Activated T-helper 2 cell treated with anti-CD3 and anti-CD28 coated beads, Interferon-gamma antibody, Interleukin-2, Interleukin-4, amounts not matched to agents 10 μg/mL and 5 μg/mL and 100 μg/mL, durations not matched to agents 14 hours and 24 hours and 36 hours (primary cell): ENCODE measurements at regions of chr16 and their contacts with region 1.

Region 1: GRCh38 chr16:2023098-2023925 is 3.4 kb upstream of the NHERF2 start:
- DNase-seq: peak; percentile 90
- H3K4me3 Mint-ChIP-seq: peak overlapping the region; percentile 73
- H3K27ac Mint-ChIP-seq: peak overlapping the region; percentile 28
- H3K4me1 Mint-ChIP-seq: peaks cover 16% of the 10 kb centered on the region
- H3K27me3 Mint-ChIP-seq: peaks cover 42% of the 10 kb centered on the region

Region 2: DNA sequence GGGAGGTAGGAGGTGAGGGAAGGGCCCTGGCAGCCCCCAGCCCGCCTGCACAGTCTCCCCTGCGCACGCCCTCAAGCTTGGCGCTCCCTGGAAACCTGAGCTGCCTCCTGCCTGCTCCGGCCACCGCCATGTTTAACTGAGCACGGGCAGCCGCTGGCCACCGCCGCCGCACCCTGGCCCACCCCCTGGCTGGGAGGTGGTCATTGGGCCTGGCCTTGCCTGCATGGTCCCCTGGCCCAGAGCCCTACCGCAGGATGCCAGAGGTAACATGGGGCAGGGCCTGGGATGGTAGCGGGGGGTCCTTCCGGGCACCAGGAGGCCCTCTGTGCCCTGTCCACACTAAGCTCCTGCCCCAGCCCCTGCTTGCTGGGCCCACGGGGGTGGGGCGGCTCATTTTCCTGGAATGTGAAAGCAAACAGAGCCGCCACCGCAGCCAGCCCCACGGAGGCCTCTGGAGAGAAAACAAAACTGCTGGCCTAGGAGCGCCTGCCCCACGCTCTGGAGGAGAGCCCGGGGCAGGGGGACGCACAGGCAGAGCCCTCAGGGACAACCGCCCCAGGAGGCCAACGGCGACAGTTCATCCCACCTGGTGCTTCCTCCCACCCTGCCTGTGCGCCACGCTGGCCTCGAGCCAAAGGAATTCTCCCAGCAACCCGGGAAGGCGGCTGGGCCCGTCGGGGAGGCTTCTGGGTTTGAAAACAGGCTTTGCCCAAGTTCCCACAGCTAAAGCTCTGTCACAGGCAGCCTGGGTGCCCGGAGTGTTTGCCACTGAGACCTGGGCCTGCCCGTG is 12.3 kb after region 1 on chr16:
- intact Hi-C with region 1: no loop called
- DNase-seq: no peak
- H3K4me3 Mint-ChIP-seq: no peak overlapping the region
- H3K27ac Mint-ChIP-seq: no peak overlapping the region
- H3K4me1 Mint-ChIP-seq: no peaks in the 10 kb centered on the region
- H3K27me3 Mint-ChIP-seq: no peaks in the 10 kb centered on the region

Region 3: DNA sequence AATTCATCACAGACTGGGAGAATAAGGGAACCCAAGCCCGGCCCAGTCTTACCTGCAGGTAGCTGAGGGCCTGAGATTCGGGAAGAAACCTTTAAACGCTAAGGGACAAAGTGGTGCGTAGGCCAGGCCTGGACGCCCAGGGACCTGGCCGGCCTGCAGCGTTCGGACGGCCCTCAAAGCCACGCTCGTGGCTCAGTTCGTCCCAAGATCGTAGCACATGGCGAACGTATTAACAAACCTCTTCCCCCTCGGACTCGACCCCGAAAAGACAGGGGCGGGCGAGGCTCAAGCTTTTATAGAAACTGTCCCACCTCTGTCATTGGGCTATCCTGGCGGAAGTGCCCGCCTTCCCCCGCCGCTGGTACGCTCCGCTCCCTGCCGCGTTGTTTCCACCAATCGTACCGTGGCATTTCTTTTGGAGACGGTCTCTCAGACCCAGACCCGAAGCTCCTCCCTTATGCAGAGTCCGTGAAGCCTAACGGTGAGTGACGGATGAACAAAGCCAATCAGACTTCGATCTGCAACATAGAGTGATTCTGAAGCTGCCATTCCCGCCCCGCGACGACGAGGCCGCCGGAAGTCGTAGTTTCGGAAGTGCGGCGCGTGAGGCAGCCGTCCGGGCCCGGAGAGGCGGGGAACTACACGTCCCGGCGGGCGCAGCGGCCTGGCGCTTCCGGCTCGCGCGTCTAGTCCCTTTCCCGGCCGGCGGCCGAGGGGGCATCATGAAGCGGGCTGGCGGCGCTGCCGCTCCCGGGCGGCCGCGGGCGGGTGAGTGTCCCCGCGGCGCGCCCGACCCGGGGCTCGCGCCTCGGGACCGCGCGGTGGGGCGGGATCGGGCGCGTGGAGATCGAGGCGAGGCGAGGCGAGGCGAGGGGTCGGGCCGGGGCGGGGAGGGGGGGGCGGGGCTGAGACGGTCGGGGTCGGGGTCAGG is 132.0 kb after region 1 on chr16 and contains the start of gene TRAF7:
- intact Hi-C with region 1: loop called (anchors 1 kb)
- DNase-seq: peak; percentile 98
- H3K4me3 Mint-ChIP-seq: peak within 1 kb of the TSS; percentile 92
- H3K27ac Mint-ChIP-seq: peak within 1 kb of the TSS; percentile 87
- H3K4me1 Mint-ChIP-seq: peaks cover 20% of the 10 kb centered on the region
- H3K27me3 Mint-ChIP-seq: no peaks in the 10 kb centered on the region
- total RNA-seq, gene TRAF7: 69.8 and 70.7 TPM in 2 replicates

Region 4: GRCh38 chr16:2251483-2252240 is 228.3 kb after region 1 on chr16 and contains the start of gene ECI1:
- intact Hi-C with region 1: loop called (anchors 10 kb)
- DNase-seq: peak; percentile 81
- H3K4me3 Mint-ChIP-seq: peak within 1 kb of the TSS; percentile 91
- H3K27ac Mint-ChIP-seq: peak within 1 kb of the TSS; percentile 91
- H3K4me1 Mint-ChIP-seq: peaks cover 1% of the 10 kb centered on the region
- H3K27me3 Mint-ChIP-seq: no peaks in the 10 kb centered on the region
- total RNA-seq, gene ECI1: 40.4 and 45.1 TPM in 2 replicates

Region 5: GRCh38 chr16:2340564-2341455 is 317.5 kb after region 1 on chr16 and contains the start of gene ABCA3:
- intact Hi-C with region 1: loop called (anchors 5 kb)
- DNase-seq: peak; percentile 96
- H3K4me3 Mint-ChIP-seq: peak within 1 kb of the TSS; percentile 84
- H3K27ac Mint-ChIP-seq: peak within 1 kb of the TSS; percentile 33
- H3K4me1 Mint-ChIP-seq: peaks cover 23% of the 10 kb centered on the region
- H3K27me3 Mint-ChIP-seq: peaks cover 28% of the 10 kb centered on the region
- total RNA-seq, gene ABCA3: 11.1 and 12.5 TPM in 2 replicates